IMR-90 (cell line): ENCODE measurements at regions of chr3 and their contacts with region 1.

Region 1: DNA sequence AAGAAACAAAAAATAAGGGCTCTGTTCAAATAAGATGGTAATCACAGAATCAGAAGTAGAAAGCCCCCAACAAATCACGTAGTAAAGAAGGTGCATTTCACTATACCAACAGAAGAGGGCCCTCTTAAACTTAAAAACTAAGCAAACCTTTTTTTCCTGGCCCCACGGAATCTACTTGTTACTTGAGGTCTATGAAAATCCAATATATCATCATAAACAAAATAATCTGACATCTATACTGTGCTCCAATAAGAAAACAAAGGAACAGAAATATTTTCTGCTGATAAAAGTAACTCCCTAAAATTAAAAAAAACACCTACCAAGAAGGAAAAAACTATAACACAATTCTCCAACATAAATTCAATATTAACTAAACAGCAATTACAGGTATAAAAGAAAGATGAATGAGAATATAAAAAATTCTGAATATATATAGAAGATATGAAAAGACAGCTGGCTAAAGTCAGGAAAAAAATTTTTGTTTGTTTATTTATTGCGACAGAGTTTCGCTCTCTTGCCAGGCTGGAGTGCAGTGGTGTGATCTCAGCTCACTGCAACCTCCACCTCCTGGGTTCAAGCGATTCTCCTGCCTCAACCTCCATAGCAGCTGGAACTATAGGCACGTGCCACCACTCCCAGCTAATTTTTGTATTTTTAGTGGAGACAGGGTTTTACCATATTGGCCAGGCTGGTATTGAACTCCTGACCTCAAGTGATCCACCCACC is 81.8 kb downstream of the CLASP2 start:
- DNase-seq: peak; percentile 78
- ATAC-seq: peak; percentile 75
- H3K4me3 ChIP-seq: no peak overlapping the region
- H3K27ac ChIP-seq: no peak overlapping the region
- H3K4me1 ChIP-seq: no peaks in the 10 kb centered on the region
- H3K27me3 ChIP-seq: no peaks in the 10 kb centered on the region
- CTCF ChIP-seq: peak; percentile 71
- POLR2A ChIP-seq: no peak
- RAD21 ChIP-seq: peak; percentile 73

Region 2: DNA sequence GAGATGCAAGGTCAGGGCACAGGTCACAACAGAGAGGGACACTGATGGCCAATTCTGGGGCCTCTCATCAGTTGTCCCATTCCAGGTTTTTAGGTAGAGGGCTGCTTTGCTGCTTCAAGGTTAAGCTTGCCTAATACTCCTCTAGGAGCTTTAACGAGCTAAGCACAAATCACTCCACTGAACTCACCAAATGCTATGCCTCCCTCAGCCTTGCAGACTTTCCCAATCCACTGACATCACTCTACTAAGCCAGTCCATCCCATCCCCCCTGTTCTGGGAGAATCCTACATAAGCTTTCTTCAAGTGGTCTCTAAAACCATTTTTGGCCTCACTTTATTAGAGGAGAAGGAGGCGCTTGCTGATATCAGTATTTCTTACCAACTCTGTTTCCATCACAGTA is 137.3 kb after region 1 on chr3:
- CTCF ChIA-PET with region 1: interaction called, 4 read pairs
- POLR2A ChIA-PET with region 1: no interaction called
- dilution Hi-C with region 1: no loop called
- in situ Hi-C with region 1: no loop called
- intact Hi-C with region 1: loop called (anchors 1 kb)
- DNase-seq: no peak
- ATAC-seq: no peak; the same call in 1 of the 2 replicates
- H3K4me3 ChIP-seq: no peak overlapping the region
- H3K27ac ChIP-seq: no peak overlapping the region
- H3K4me1 ChIP-seq: no peaks in the 10 kb centered on the region
- H3K27me3 ChIP-seq: no peaks in the 10 kb centered on the region
- CTCF ChIP-seq: no peak
- POLR2A ChIP-seq: no peak
- RAD21 ChIP-seq: no peak